ENCODE measurements at regions of chr6 and their contacts with region 1.

Region 1: GRCh38 chr6:39892490-39893129 is 41.7 kb downstream of the MOCS1 start:
- DNase-seq: peak; percentile 55
- H3K4me3 Mint-ChIP-seq: no peak overlapping the region
- H3K27ac Mint-ChIP-seq: no peak overlapping the region
- H3K4me1 Mint-ChIP-seq: no peaks in the 10 kb centered on the region
- H3K27me3 Mint-ChIP-seq: no peaks in the 10 kb centered on the region
- CTCF ChIP-seq: peak; percentile 67

Region 2: GRCh38 chr6:39347906-39348585 is 544.6 kb before region 1 on chr6:
- CTCF ChIA-PET with region 1: interaction called, 13 read pairs
- POLR2A ChIA-PET with region 1: no interaction called
- intact Hi-C with region 1: no loop called
- DNase-seq: peak; percentile 62
- H3K4me3 Mint-ChIP-seq: no peak overlapping the region
- H3K27ac Mint-ChIP-seq: no peak overlapping the region
- H3K4me1 Mint-ChIP-seq: no peaks in the 10 kb centered on the region
- H3K27me3 Mint-ChIP-seq: no peaks in the 10 kb centered on the region
- CTCF ChIP-seq: peak; percentile 91

Region 3: DNA sequence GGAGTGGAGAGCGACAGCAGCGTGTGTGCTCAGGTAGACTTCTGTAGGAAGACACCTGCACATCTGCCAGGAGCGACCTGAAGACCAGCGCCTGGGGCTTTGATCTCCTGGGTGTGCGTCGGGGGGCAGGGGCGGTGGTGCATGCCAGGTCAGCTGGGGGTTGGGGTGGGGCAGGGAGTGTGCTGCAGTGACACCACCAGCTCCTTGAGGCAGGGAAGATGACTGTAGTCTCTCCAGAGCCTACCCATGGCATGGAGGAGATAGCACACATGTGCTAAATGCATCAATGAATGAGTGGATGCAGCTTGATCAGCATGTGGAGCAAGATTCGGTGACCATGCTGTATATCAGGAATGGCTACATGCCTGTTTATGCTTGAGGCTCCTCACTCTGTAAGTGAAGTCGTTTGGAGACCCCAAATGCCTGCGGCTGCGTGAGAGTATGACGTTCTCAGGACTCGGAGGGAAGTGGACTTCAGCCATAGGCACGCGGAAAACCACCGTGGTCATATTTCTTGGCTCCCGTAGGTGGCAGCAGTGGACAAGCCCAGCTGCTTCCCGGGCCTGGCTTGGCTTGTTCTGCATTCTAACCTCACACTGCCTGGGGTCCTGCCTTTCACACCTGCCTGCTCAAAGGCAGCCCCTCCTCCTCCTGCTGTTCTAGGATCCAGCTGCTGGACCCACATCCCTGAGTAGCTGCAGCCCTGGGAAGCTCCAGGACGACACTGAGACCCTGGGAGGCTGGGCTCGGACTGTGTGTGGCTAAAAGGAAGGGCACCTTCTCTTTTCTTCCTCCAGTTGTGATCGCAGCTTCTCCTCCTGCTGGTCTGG is 530.7 kb before region 1 on chr6:
- CTCF ChIA-PET with region 1: interaction called, 62 read pairs
- POLR2A ChIA-PET with region 1: no interaction called
- intact Hi-C with region 1: loop called (anchors 1 kb)
- DNase-seq: peak; percentile 70
- H3K4me3 Mint-ChIP-seq: no peak overlapping the region
- H3K27ac Mint-ChIP-seq: no peak overlapping the region
- H3K4me1 Mint-ChIP-seq: peaks cover 14% of the 10 kb centered on the region
- H3K27me3 Mint-ChIP-seq: no peaks in the 10 kb centered on the region
- CTCF ChIP-seq: peak; percentile 78

Region 4: GRCh38 chr6:39369987-39370386 is 522.6 kb before region 1 on chr6:
- CTCF ChIA-PET with region 1: interaction called, 88 read pairs
- POLR2A ChIA-PET with region 1: no interaction called
- intact Hi-C with region 1: no loop called
- DNase-seq: peak; percentile 9
- H3K4me3 Mint-ChIP-seq: no peak overlapping the region
- H3K27ac Mint-ChIP-seq: no peak overlapping the region
- H3K4me1 Mint-ChIP-seq: peaks cover 6% of the 10 kb centered on the region
- H3K27me3 Mint-ChIP-seq: no peaks in the 10 kb centered on the region
- CTCF ChIP-seq: no peak

Region 5: DNA sequence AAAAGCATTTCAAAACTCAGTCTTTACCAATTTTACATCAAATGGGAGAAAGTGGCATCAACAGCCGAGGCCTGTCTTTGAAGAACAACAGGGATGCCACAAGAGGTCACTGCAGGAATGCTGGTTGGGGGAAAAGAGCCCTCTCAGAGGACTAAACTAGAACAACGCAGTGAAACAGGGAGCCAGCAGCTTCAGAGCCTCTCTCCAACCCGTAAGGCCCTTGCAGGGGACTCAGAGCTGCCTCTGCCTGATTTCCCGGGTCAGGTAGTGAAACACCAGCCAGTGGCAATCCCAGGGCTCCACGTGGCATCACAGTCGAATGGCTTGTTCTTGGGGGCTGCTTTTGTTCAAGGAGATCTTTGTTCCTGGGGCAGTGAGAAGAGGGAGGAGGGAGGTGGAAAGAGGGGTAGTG is 515.1 kb before region 1 on chr6:
- CTCF ChIA-PET with region 1: interaction called, 88 read pairs
- POLR2A ChIA-PET with region 1: no interaction called
- intact Hi-C with region 1: loop called (anchors 1 kb)
- DNase-seq: peak; percentile 73
- H3K4me3 Mint-ChIP-seq: no peak overlapping the region
- H3K27ac Mint-ChIP-seq: no peak overlapping the region
- H3K4me1 Mint-ChIP-seq: peaks cover 5% of the 10 kb centered on the region
- H3K27me3 Mint-ChIP-seq: no peaks in the 10 kb centered on the region
- CTCF ChIP-seq: peak; percentile 86

Region 6: GRCh38 chr6:39812853-39813533 is 79.6 kb before region 1 on chr6:
- CTCF ChIA-PET with region 1: no interaction called
- POLR2A ChIA-PET with region 1: no interaction called
- intact Hi-C with region 1: no loop called
- DNase-seq: no peak
- H3K4me3 Mint-ChIP-seq: no peak overlapping the region
- H3K27ac Mint-ChIP-seq: no peak overlapping the region
- H3K4me1 Mint-ChIP-seq: no peaks in the 10 kb centered on the region
- H3K27me3 Mint-ChIP-seq: no peaks in the 10 kb centered on the region
- CTCF ChIP-seq: no peak

Region 7: GRCh38 chr6:39913061-39913913 is 20.7 kb after region 1 on chr6:
- CTCF ChIA-PET with region 1: no interaction called
- POLR2A ChIA-PET with region 1: no interaction called
- intact Hi-C with region 1: no loop called
- DNase-seq: no peak
- H3K4me3 Mint-ChIP-seq: no peak overlapping the region
- H3K27ac Mint-ChIP-seq: no peak overlapping the region
- H3K4me1 Mint-ChIP-seq: no peaks in the 10 kb centered on the region
- H3K27me3 Mint-ChIP-seq: no peaks in the 10 kb centered on the region
- CTCF ChIP-seq: no peak